ENCODE measurements at regions of chr9 and their contacts with region 1.

Region 1: GRCh38 chr9:7234143-7234542 is 476.4 kb downstream of the KDM4C start:
- DNase-seq: peak; percentile 85
- ATAC-seq: peak; percentile 90
- H3K4me3 Mint-ChIP-seq: no peak overlapping the region
- H3K27ac Mint-ChIP-seq: no peak overlapping the region
- H3K4me1 Mint-ChIP-seq: peaks cover 45% of the 10 kb centered on the region
- H3K27me3 Mint-ChIP-seq: no peaks in the 10 kb centered on the region; the same call in none of the 2 replicates
- CTCF ChIP-seq: peak; percentile 65

Region 2: DNA sequence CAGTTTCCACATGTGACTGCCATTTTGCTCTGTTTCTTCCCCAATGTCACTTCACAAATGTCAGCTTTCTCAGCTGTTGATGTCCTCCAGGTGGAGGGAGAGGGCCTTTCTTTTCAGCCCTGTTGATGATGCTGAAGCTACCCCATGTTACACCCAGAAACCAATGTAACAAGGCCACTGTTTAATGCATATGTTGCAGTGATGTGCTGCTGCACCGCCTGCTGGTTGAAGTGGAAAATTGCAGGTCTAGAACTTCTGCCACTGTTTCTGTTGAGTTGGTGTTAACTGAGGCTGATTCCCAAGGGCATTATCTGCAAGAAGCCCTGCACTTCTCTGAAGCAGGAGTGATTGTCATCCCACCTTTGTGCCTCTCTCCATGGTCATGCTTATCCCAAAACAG is 48.0 kb before region 1 on chr9:
- CTCF ChIA-PET with region 1: interaction called, 12 read pairs
- POLR2A ChIA-PET with region 1: no interaction called
- DNase-seq: peak; percentile 46
- ATAC-seq: peak; percentile 80
- H3K4me3 Mint-ChIP-seq: no peak overlapping the region
- H3K27ac Mint-ChIP-seq: no peak overlapping the region
- H3K4me1 Mint-ChIP-seq: peaks cover 11% of the 10 kb centered on the region
- H3K27me3 Mint-ChIP-seq: peaks cover 4% of the 10 kb centered on the region; the same call in 1 of the 2 replicates
- CTCF ChIP-seq: peak; percentile 82

Region 3: DNA sequence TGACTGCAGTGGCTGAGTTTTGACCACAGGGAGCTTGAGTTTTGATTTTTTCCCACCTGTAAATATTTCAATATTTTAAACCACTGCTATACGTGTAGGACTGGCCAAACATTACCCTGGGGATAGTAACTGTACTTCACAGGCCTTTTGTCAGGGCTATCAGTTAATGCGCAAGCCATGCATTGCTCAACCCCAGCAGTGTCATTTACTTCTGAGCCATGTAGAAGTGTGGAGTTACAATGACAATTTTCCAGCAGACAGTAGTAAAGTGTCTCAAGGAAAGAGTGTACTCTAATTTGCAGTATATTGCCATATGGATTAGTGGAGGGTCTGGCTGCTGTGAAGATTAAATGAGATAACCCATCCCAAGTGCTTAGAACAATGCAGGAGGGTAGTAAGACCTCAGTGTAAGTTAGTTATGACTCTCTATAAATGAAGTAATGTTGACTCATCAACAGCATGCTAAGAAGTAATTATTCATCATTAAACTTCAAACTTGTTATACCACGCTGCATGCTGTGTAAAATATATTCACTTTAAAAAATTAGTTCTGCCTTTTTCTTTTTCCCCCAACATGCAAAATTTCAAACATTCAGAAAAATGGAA is 12.9 kb after region 1 on chr9:
- CTCF ChIA-PET with region 1: interaction called, 13 read pairs
- POLR2A ChIA-PET with region 1: no interaction called
- DNase-seq: no peak
- ATAC-seq: no peak
- H3K4me3 Mint-ChIP-seq: no peak overlapping the region
- H3K27ac Mint-ChIP-seq: no peak overlapping the region
- H3K4me1 Mint-ChIP-seq: peaks cover 29% of the 10 kb centered on the region
- H3K27me3 Mint-ChIP-seq: peaks cover 11% of the 10 kb centered on the region; the same call in 1 of the 2 replicates
- CTCF ChIP-seq: no peak

Region 4: DNA sequence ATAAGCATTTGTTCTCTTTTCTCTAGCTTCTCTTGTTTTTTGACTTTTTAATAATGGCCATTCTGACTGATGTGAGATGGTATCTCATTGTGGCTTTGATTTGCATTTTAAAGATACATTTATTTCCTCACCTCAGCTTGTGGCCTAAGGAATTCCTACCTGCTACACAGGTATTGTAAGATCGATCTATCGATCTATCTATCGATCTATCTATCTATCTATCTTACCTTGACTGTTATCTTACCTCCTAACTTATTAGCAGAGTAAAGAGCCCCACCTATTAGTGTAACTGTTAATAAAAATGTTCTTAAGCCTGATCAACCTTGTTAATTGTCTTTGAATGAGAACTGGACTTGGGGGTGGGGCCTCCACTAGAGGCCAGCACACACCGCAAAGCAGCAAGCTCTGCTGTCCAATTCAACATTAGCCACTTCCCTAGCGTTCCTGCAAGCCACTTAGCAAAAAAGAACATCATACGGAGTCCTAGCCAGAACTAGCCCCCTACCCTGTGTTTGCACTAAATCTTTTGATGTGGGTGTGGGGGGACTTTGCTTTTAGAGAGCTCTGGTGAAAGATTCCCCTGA is 39.3 kb after region 1 on chr9:
- CTCF ChIA-PET with region 1: interaction called, 10 read pairs
- POLR2A ChIA-PET with region 1: no interaction called
- DNase-seq: no peak
- ATAC-seq: peak; percentile 48; the same call in 1 of the 2 replicates
- H3K4me3 Mint-ChIP-seq: no peak overlapping the region
- H3K27ac Mint-ChIP-seq: no peak overlapping the region
- H3K4me1 Mint-ChIP-seq: peaks cover 13% of the 10 kb centered on the region
- H3K27me3 Mint-ChIP-seq: no peaks in the 10 kb centered on the region
- CTCF ChIP-seq: no peak

Region 5: DNA sequence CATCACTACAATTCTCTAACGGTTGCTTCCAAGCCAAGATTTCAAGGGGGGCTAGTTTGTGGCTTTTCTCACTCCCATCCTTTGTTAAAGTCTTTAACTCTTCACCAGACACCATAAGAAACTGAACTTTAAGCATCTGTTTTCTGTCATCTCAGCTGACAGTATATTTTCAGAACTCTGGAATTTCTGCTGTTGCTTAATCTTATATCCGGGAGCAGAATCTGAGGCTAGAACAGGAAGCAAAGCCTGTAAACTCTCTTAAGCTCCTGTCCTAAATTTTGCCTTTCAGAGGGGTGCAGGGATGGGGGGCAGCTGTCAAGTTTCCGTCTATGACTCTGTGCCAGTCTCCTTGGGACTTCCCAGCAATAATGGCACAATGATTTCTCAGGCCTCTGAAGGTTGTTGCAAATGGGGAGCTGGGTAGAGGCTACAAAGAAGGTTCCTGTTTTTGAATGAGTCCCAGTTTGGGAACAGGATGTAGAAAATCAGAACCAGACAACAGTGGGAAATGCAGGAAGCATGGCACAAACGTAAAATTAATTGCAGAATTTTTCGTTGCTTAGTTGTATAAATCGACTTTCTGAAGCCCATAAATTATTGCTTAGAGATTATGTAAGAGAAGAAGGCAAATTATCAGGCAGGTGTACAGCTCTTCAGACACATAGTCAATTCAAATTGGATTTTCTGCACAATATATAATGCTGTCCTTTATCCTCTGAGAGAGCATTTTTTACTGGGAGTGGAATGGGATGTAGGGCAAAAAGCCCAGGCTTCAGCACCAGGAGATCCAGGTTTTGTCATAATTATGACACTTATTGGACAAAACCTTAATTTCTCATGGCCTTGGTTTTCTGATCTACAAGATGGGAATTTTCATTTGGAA is 134.5 kb after region 1 on chr9:
- CTCF ChIA-PET with region 1: no interaction called
- POLR2A ChIA-PET with region 1: no interaction called
- DNase-seq: no peak
- ATAC-seq: no peak
- H3K4me3 Mint-ChIP-seq: no peak overlapping the region
- H3K27ac Mint-ChIP-seq: no peak overlapping the region
- H3K4me1 Mint-ChIP-seq: peaks cover 18% of the 10 kb centered on the region
- H3K27me3 Mint-ChIP-seq: no peaks in the 10 kb centered on the region
- CTCF ChIP-seq: no peak

Region 6: DNA sequence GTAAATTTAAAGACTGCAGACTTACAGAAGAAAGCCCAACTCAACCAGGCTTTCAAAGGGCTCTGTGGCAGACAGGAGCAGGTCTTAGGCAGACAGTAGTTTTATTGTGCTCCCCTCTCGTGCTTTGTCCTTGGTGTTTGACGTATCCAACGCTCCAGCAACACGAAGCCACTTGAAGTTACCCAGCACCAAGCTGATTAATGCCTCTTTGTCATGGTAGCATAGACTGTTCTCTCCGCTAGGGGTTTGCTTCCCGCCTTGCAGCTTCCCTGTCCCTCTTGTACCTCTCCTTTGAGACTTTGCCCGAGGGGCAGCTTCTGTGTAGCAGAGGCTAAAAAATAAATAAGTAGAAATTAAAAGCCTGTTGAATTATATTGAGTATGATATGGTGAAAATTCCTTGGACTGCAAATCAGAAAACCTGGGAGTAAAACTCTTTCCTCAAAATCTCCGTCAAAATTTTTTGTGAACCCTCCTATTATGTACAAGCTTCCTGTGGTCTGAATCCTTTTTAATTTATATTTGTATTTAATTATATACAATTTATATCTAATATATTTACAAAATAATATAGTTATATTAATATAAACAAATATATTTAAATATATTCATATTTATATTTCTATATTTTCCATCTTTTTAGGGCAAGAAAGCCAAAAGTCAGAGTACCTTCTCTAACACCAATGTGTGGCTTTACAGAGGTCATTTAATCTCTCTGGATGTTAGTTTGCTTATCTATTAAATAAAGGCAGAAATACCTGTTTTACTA is 160.0 kb after region 1 on chr9:
- CTCF ChIA-PET with region 1: interaction called, 10 read pairs
- POLR2A ChIA-PET with region 1: no interaction called
- DNase-seq: peak; percentile 18
- ATAC-seq: peak; percentile 98
- H3K4me3 Mint-ChIP-seq: no peak overlapping the region
- H3K27ac Mint-ChIP-seq: no peak overlapping the region
- H3K4me1 Mint-ChIP-seq: peaks cover 7% of the 10 kb centered on the region
- H3K27me3 Mint-ChIP-seq: no peaks in the 10 kb centered on the region
- CTCF ChIP-seq: no peak